Breast epithelium (tissue), 4 donors: ENCODE measurements at regions of chr20 and their contacts with region 1.

Region 1: GRCh38 chr20:18739751-18740166 is 73.8 kb upstream of the SCP2D1 start:
- DNase-seq: no peak
- H3K4me3 ChIP-seq: no peak overlapping the region
- H3K27ac ChIP-seq: peak overlapping the region in 1 of 2 donors; percentile 12
- H3K4me1 ChIP-seq: no peaks in the 10 kb centered on the region
- H3K27me3 ChIP-seq: no peaks in the 10 kb centered on the region
- CTCF ChIP-seq: no peak
- POLR2A ChIP-seq: no peak

Region 2: DNA sequence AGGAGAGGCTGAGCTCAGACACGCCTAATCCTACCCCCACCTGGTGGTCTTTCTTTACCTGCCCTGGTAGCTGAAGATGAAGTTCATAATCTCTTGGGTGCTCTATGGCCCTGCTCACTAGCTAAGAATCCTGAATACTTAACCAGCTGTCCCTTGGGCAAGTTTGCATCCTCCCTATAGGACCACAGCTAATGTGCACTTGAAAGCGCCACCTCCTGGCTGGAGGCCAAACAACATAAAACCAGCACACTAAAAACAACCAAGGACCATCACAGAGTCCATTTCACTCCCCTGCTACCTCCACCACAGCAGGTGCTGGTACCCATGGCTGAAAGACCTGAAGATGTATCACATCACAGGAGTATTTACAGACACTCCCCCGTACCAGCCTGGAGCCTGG is 317.1 kb after region 1 on chr20:
- intact Hi-C with region 1: loop called (anchors 5 kb)
- DNase-seq: no peak
- H3K4me3 ChIP-seq: no peak overlapping the region
- H3K27ac ChIP-seq: no peak overlapping the region
- H3K4me1 ChIP-seq: no peaks in the 10 kb centered on the region
- H3K27me3 ChIP-seq: no peaks in the 10 kb centered on the region
- CTCF ChIP-seq: no peak
- POLR2A ChIP-seq: no peak